T-cell (primary cell): ENCODE measurements at regions of chr19 and their contacts with region 1.

Region 1: GRCh38 chr19:40777937-40778705 is at the start of gene RAB4B:
- DNase-seq: peak; percentile 99 to 100 (median 100)
- ATAC-seq: peak; percentile 84 to 89 (median 88)
- H3K4me3 ChIP-seq: peak within 1 kb of the TSS; percentile 67 to 96
- H3K4me3 Mint-ChIP-seq: peak within 1 kb of the TSS; percentile 83 to 90 (median 88)
- H3K27ac ChIP-seq: peak within 1 kb of the TSS; percentile 86
- H3K27ac Mint-ChIP-seq: peak within 1 kb of the TSS; percentile 96
- H3K4me1 ChIP-seq: peaks cover 9 to 26% of the 10 kb centered on the region in 2 experiments
- H3K4me1 Mint-ChIP-seq: peaks cover 26 to 40% (median 38%) of the 10 kb centered on the region in 3 donors
- H3K27me3 ChIP-seq: no peaks in the 10 kb centered on the region
- H3K27me3 Mint-ChIP-seq: no peaks in the 10 kb centered on the region
- total RNA-seq, gene RAB4B: 42.4 to 77.9 (median 63.2) TPM

Region 2: GRCh38 chr19:40570313-40571004 is 207.7 kb before region 1 on chr19:
- CTCF ChIA-PET with region 1: interaction called in 1 of 2 experiments, 20 read pairs
- POLR2A ChIA-PET with region 1: no interaction called
- DNase-seq: peak; percentile 85 to 100 (median 95)
- ATAC-seq: peak; percentile 86 to 90 (median 88)
- H3K4me3 ChIP-seq: peak overlapping the region in 1 of 2 donors; percentile 36
- H3K4me3 Mint-ChIP-seq: peak overlapping the region; percentile 53 to 69 (median 68)
- H3K27ac ChIP-seq: no peak overlapping the region
- H3K27ac Mint-ChIP-seq: peak overlapping the region; percentile 77 to 83
- H3K4me1 ChIP-seq: peaks cover 0 to 28% of the 10 kb centered on the region in 2 experiments
- H3K4me1 Mint-ChIP-seq: peaks cover 12 to 23% (median 13%) of the 10 kb centered on the region in 3 donors
- H3K27me3 ChIP-seq: peaks cover 8 to 39% of the 10 kb centered on the region in 2 experiments
- H3K27me3 Mint-ChIP-seq: peaks cover 3 to 23% of the 10 kb centered on the region in 2 donors

Region 3: DNA sequence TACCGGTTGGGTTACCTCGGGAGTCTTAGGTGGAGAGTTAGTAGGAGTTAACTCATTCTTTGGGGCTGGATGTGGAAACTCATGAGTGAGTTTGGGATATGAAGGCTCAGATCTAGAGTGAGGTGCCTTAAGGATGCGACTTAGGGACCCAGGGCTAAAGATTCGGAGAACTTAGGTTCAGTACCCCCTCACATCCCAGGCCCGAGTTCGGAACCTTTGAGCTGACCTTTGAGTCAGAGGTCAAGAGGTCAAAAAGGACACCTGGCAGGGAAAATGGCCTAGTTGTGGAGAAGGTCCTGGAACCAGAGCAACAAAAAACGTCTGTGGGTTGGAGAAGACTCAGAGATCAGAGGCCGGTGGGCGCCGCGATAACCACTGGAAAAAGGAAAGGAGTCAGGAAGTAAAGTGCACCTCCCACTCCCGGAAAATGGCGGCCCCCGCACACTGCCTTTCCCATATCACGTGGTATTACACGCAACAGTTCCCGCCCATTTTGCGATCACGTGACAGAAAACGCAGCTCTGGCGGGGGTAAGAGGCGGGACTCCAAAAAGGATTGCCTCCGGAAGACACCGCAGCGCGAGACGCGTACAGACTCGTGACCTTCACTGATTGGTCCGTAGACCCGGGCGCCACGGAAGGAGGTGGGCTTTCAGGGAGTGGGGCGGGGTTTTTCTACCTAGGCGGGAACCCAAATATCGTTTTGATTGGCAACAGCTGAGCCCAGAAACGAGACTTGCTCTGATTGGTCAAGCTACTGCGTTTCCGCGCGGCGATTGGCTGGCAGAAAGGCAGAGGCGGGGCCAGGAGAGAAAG is 27.9 kb before region 1 on chr19 and contains the start of gene ACTMAP:
- CTCF ChIA-PET with region 1: interaction called in 1 of 2 experiments, 19 read pairs
- POLR2A ChIA-PET with region 1: interaction called in 1 of 2 experiments, 13 read pairs
- DNase-seq: peak; percentile 98 to 100 (median 99)
- ATAC-seq: peak; percentile 89 to 91 (median 89)
- H3K4me3 ChIP-seq: peak within 1 kb of the TSS; percentile 91 to 92
- H3K4me3 Mint-ChIP-seq: peak within 1 kb of the TSS; percentile 91 to 100 (median 97)
- H3K27ac ChIP-seq: peak within 1 kb of the TSS; percentile 83
- H3K27ac Mint-ChIP-seq: peak within 1 kb of the TSS; percentile 98 to 99
- H3K4me1 ChIP-seq: peaks cover 8 to 53% of the 10 kb centered on the region in 2 experiments
- H3K4me1 Mint-ChIP-seq: peaks cover 35 to 46% (median 43%) of the 10 kb centered on the region in 3 donors
- H3K27me3 ChIP-seq: no peaks in the 10 kb centered on the region
- H3K27me3 Mint-ChIP-seq: no peaks in the 10 kb centered on the region
- total RNA-seq, gene ACTMAP: 4.7 to 8.3 (median 6.8) TPM

Region 4: DNA sequence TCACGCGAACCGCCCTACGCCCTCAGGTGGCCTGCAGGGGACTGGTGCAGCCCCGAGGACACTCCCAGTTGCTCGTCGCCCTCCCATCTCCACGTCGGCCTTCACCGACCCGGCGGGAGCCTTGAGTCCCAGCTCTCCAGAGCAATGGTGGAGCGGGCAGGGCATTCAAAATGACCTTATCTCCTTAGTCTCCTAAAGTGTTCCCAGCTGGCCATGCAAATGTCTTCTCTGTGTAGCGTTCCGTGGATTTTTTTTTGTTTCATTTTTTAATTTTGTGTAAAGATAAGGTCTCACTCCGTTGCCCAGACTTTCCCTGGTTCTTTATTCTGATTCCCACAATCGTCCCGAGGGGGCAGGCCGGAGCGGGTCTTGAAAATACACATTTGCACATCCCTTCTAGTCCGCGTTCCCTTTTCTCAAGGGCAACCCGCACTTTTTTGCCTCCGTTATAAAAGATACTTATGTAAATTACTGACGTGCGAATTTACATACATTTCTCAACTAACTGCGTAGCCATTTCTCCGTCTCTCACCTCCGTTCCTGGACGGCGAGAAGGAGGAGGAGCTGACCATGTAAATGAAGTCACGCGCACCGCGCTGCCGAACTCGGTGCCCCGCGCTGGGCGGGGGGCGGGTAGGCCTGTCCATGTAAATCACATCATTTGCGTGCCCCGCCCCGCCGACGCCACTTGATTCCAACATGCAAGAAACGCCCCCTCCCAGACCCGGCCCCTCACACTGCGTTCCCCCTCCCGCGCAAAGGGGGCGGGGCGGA is 20.3 kb after region 1 on chr19:
- CTCF ChIA-PET with region 1: interaction called in 1 of 2 experiments, 30 read pairs
- POLR2A ChIA-PET with region 1: interaction called, 3 to 23 read pairs
- DNase-seq: peak; percentile 100
- ATAC-seq: peak; percentile 25 to 84 (median 78)
- H3K4me3 ChIP-seq: peak overlapping the region; percentile 86 to 87
- H3K4me3 Mint-ChIP-seq: peak overlapping the region; percentile 92 to 94 (median 93)
- H3K27ac ChIP-seq: peak overlapping the region; percentile 99
- H3K27ac Mint-ChIP-seq: peak overlapping the region; percentile 98 to 99
- H3K4me1 ChIP-seq: peaks cover 30 to 49% of the 10 kb centered on the region in 2 experiments
- H3K4me1 Mint-ChIP-seq: peaks cover 46 to 52% (median 50%) of the 10 kb centered on the region in 3 donors
- H3K27me3 ChIP-seq: no peaks in the 10 kb centered on the region
- H3K27me3 Mint-ChIP-seq: no peaks in the 10 kb centered on the region

Region 5: DNA sequence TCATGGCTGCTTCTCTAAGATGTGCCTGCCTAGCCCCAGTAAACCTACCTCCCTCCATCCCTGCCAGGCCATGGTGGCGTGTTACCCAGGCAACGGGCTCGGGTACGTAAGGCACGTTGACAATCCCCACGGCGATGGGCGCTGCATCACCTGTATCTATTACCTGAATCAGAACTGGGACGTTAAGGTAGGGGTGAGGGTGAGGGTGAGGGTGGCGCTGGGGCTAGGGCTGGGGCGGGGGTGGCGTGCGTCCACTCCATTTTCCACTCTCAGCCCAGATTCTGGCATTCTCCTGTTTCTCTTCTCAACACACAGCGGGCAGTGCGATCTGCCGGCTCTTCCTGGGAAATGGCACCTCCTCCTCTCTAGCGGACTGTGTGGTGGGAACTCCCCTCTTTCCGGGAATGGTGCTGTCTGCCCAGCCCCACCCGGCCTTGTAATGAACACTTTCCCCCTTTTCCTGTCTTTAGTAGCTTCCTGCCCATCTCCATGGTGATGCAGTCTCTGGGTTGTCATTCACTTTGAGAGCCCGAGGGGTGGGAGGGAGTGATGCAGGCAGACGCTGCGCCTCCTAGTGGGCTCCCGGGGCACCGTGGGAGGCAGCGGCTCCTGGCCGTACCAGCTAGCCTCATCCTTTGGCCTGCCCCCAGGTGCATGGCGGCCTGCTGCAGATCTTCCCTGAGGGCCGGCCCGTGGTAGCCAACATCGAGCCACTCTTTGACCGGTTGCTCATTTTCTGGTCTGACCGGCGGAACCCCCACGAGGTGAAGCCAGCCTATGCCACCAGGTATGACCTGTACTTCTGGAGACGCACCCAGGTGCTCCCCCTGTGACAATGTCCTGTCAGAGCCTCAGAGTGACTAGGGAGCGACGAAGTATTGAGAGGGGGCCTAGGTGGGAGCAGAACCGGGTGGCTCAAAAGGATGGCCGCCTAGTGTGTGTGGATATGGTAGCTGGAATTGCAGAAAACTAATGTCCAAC is 28.7 kb after region 1 on chr19:
- CTCF ChIA-PET with region 1: interaction called, 4 to 19 read pairs
- POLR2A ChIA-PET with region 1: interaction called in 1 of 2 experiments, 10 read pairs
- DNase-seq: peak; percentile 41 to 91 (median 75)
- ATAC-seq: peak; percentile 34 to 62 (median 44)
- H3K4me3 ChIP-seq: peak overlapping the region; percentile 6 to 38
- H3K4me3 Mint-ChIP-seq: peak overlapping the region; percentile 58 to 93 (median 84)
- H3K27ac ChIP-seq: peak overlapping the region; percentile 85
- H3K27ac Mint-ChIP-seq: peak overlapping the region; percentile 96 to 99
- H3K4me1 ChIP-seq: peaks cover 64 to 99% of the 10 kb centered on the region in 2 experiments
- H3K4me1 Mint-ChIP-seq: peaks cover 87 to 96% (median 96%) of the 10 kb centered on the region in 3 donors
- H3K27me3 ChIP-seq: peaks cover 0 to 1% of the 10 kb centered on the region in 2 experiments
- H3K27me3 Mint-ChIP-seq: no peaks in the 10 kb centered on the region

Region 6: GRCh38 chr19:40813182-40813958 is 35.2 kb after region 1 on chr19:
- CTCF ChIA-PET with region 1: interaction called in 1 of 2 experiments, 11 read pairs
- POLR2A ChIA-PET with region 1: no interaction called
- DNase-seq: no peak
- ATAC-seq: no peak
- H3K4me3 ChIP-seq: no peak overlapping the region
- H3K4me3 Mint-ChIP-seq: peak overlapping the region in 2 of 3 donors; percentile 17 to 96
- H3K27ac ChIP-seq: no peak overlapping the region
- H3K27ac Mint-ChIP-seq: peak overlapping the region in 1 of 2 donors; percentile 55
- H3K4me1 ChIP-seq: peaks cover 6 to 47% of the 10 kb centered on the region in 2 experiments
- H3K4me1 Mint-ChIP-seq: peaks cover 38 to 63% (median 56%) of the 10 kb centered on the region in 3 donors
- H3K27me3 ChIP-seq: peaks cover 0 to 5% of the 10 kb centered on the region in 2 experiments
- H3K27me3 Mint-ChIP-seq: no peaks in the 10 kb centered on the region

Region 7: DNA sequence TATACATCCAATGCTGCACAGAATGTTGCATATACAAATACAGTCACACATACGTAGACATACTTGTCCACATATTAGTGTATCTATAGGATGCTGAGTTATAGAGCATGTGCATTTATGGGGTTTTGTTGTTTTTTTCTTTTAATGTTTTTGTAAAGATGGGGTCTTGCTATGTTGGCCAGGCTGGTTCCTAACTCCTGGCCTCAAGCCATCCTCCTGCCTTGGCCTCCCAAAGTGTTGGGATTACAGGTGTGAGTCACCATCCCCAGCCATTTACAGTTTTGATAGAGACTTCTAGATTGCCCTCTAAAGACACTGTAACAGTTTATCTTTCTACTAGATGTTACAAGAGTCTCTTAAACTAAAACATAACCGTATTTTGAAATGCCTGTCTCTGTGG is 500.4 kb after region 1 on chr19:
- CTCF ChIA-PET with region 1: no interaction called
- POLR2A ChIA-PET with region 1: no interaction called
- DNase-seq: no peak
- ATAC-seq: no peak
- H3K4me3 ChIP-seq: no peak overlapping the region
- H3K4me3 Mint-ChIP-seq: no peak overlapping the region
- H3K27ac ChIP-seq: no peak overlapping the region
- H3K27ac Mint-ChIP-seq: no peak overlapping the region
- H3K4me1 ChIP-seq: no peaks in the 10 kb centered on the region
- H3K4me1 Mint-ChIP-seq: peaks cover 3 to 10% (median 9%) of the 10 kb centered on the region in 3 donors
- H3K27me3 ChIP-seq: no peaks in the 10 kb centered on the region
- H3K27me3 Mint-ChIP-seq: no peaks in the 10 kb centered on the region